ENCODE measurements at regions of chr6 and their contacts with region 1.

Region 1: DNA sequence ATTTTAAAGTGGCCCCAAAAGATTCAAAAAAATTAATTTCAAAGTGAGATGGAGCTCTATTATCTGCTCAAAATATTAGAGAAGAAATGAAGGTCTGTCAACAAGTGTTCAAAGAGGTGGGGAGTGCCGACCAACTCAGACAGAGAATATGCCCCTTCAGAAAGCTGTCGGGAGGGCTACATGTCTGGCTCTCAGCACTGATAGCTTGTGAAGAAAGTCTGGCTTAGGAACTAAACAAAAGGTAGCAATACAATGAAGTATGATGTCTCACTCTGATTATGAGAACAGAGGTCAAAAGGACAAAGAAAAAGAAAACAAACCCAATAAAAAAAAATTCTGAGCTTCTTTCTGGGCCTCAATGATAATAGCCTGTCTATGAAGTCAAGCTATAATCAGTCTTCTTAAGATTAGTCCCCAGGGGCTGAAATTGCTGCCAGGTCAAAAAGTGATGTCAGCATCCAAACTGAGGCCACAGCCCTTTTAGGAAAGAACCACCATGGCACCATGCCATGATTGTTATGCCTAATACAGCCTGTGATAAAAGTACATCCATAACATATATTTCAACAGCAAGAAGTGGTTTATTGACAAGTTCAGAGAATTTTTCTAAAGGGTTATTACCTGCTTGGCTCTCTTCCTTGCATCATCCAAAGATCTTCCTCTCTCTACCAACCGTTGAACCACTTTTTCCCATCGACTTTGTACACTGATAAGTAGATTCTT is 150.9 kb downstream of the DST start:
- DNase-seq: no peak
- H3K4me3 ChIP-seq: no peak overlapping the region
- H3K27ac ChIP-seq: peak overlapping the region; percentile 70 to 81 (median 74)
- H3K4me1 ChIP-seq: peaks cover 16 to 68% (median 60%) of the 10 kb centered on the region in 4 donors
- H3K27me3 ChIP-seq: no peaks in the 10 kb centered on the region
- CTCF ChIP-seq: no peak
- EP300 ChIP-seq: no peak
- POLR2A ChIP-seq: no peak

Region 2: DNA sequence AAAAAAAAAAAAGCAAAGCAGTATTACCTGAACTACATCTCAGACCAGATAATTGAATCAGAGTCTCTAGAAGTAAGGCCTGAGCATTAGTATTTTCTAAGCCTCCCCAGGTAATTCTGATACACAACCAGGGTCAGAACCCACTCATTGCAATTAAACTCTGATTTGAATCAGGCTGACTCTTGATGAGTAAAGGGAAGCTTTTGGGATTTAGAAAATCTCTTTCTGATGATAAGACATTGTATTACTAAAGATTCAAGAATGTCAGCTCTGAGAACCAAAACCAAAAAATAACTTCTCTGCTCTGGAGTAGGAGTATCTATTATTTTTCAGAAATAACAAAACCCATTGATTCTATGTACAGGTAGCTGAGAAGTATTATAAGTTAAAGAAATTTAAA is 144.2 kb before region 1 on chr6:
- intact Hi-C with region 1: no loop called
- DNase-seq: no peak
- H3K4me3 ChIP-seq: no peak overlapping the region
- H3K27ac ChIP-seq: no peak overlapping the region
- H3K4me1 ChIP-seq: no peaks in the 10 kb centered on the region
- H3K27me3 ChIP-seq: no peaks in the 10 kb centered on the region
- CTCF ChIP-seq: no peak
- EP300 ChIP-seq: no peak
- POLR2A ChIP-seq: no peak

Region 3: DNA sequence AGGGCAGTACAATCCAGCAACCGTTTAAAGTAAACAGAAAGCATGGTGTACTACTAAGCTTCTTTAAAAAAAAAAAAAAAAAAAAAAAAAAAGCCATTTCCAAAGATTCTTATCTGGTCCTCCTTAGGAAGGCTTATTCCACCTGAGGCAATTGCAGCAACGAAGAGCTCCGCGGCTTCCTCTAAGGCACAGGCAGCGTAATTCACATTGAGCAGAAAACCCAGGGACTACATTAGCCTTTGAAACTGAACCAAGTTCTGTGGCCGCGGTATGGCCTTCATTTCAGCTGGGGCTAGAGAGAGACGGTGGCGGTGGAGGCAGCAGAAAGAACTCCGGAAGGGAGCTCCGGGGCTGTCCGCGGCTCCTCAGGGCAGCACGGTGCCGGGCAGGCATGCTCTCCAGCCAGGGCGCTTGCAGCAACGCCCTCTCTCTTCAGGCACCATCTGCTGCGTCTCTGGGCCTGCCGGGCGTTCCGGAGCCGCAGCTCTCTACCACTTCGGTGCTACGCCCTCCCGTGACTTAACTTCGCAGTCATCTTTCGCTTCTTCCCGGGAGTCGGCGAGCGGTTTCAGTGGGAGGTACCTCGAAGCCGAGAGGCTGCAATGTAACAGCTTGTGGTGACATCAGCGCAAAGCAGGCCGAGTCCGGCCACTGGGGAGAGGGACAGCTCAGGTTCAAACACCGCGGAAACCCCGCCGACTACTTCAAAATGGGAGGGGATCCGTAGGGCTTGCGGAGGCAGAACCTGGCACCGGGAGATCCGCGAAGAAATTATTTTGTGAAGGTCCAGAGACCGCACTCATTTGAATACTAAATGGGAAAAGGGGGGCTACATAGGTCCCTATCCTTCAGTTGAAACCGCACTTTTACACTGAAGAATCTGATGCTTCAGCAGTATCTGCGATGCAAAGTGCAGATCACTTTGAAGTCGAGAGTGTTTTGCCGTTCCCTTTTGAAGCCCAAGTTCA is 50.9 kb after region 1 on chr6:
- intact Hi-C with region 1: loop called (anchors 5 kb)
- DNase-seq: peak; percentile 98
- H3K4me3 ChIP-seq: peak overlapping the region; percentile 61 to 78 (median 68)
- H3K27ac ChIP-seq: peak overlapping the region; percentile 91 to 97 (median 92)
- H3K4me1 ChIP-seq: peaks cover 33 to 68% (median 52%) of the 10 kb centered on the region in 4 donors
- H3K27me3 ChIP-seq: no peaks in the 10 kb centered on the region
- CTCF ChIP-seq: peak; percentile 44 to 66 (median 54)
- EP300 ChIP-seq: no peak
- POLR2A ChIP-seq: peak; percentile 66

Measured in esophagus muscularis mucosa (tissue), 4 donors.